ENCODE measurements at regions of chr17 and their contacts with region 1.

Region 1: GRCh38 chr17:57855391-57856035 is 5.7 kb upstream of the MRPS23 start:
- DNase-seq: no peak
- H3K4me3 ChIP-seq: no peak overlapping the region
- H3K27ac ChIP-seq: no peak overlapping the region
- H3K27me3 ChIP-seq: no peaks in the 10 kb centered on the region
- CTCF ChIP-seq: no peak

Region 2: DNA sequence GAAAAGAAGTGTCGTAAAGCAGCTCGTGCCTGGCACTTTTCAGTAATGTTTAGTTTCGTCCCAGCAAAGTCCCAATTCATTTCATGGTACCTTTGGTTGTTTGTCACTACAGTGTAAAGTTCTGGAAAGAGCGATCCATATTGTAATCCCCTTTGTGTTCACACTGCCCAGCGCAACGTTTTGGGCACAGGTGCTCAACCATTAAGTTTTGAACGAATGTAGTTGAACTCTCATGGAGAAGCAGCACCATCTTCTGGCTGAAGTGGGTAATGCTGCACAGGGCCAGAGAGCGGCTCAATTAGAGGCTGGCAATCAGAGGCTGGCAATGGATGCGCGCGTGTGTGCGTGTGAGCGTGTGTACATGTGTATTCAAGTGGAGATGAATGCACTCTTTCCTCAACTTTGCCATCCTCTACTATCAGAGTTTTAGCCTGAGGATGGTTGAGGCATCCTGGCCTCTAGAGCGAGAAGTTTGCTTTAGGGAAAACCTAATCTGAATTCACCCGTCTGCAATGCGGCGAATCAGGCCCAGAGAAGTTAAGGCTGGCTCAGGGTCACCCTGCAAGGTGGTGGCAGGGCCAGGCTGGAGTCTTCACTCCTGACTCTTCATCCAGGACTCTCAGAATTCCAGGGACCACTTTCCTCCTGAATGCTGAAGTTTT is 257.6 kb after region 1 on chr17:
- intact Hi-C with region 1: loop called (anchors 2 to 5 kb)
- DNase-seq: peak; percentile 67 to 90 (median 79)
- H3K4me3 ChIP-seq: peak overlapping the region in 3 of 59 donors; percentile 9 to 27 (median 22)
- H3K27ac ChIP-seq: no peak overlapping the region
- H3K27me3 ChIP-seq: peaks cover 0 to 4% (median 0%) of the 10 kb centered on the region in 45 donors
- CTCF ChIP-seq: peak; percentile 78 to 98 (median 94)

Measured in dorsolateral prefrontal cortex (tissue), 120 donors.